CD4-positive, alpha-beta memory T cell (primary cell): ENCODE measurements at regions of chr9 and their contacts with region 1.

Region 1: GRCh38 chr9:131253891-131254491 is 22.3 kb downstream of the FAM78A start:
- DNase-seq: no peak
- H3K4me3 ChIP-seq: no peak overlapping the region
- H3K4me3 Mint-ChIP-seq: peak overlapping the region in 7 of 8 donors; percentile 27 to 91 (median 46)
- H3K27ac ChIP-seq: peak overlapping the region; percentile 77
- H3K27ac Mint-ChIP-seq: peak overlapping the region; percentile 57 to 100 (median 72)
- H3K4me1 ChIP-seq: peaks cover 72% of the 10 kb centered on the region
- H3K4me1 Mint-ChIP-seq: peaks cover 27 to 73% (median 50%) of the 10 kb centered on the region in 4 donors
- H3K27me3 ChIP-seq: no peaks in the 10 kb centered on the region
- H3K27me3 Mint-ChIP-seq: no peaks in the 10 kb centered on the region

Region 2: DNA sequence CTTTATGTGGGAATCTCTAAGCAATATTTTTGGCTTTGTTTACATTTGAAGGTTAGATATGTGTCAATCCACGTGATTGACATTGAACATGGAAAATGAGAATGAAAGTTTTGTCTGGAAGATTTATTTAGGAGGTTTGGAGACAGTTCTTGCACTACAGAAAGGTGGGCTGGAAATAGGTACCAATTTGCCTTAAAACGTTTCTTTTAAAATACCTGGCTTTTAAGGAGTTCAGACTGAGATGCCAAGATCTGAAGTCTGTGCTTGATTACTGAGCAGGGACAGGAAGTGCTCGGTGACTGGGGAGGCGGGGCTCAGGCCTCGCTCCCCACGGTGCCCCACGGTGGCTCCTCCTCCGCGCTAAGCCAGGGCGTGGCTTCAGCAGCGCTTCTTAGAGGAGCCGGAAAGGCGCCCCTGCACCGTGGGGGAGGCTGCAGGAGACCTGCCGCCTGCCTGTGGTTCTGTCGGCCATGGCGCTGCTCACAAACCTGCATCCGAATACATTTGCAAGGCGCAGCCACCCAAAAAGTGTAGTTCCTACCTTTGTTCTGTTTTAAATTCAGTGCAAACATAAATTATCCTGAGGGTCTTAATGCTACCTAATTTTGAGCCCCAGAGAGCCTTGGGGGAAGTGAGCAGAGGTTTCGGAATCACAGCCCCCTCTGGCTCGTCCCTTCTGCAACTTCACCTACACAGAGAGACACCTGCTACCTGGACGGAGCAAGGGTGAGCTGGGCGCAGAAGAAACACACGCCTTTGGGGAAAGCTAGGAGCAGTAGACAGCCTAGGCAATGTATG is 1369.6 kb before region 1 on chr9:
- CTCF ChIA-PET with region 1: no interaction called
- POLR2A ChIA-PET with region 1: no interaction called
- intact Hi-C with region 1: no loop called
- DNase-seq: peak; percentile 93 to 97 (median 95)
- H3K4me3 ChIP-seq: peak overlapping the region; percentile 78 to 80
- H3K4me3 Mint-ChIP-seq: peak overlapping the region; percentile 90 to 98 (median 94)
- H3K27ac ChIP-seq: peak overlapping the region; percentile 98
- H3K27ac Mint-ChIP-seq: peak overlapping the region; percentile 99 to 100 (median 100)
- H3K4me1 ChIP-seq: peaks cover 62% of the 10 kb centered on the region
- H3K4me1 Mint-ChIP-seq: peaks cover 26 to 60% (median 40%) of the 10 kb centered on the region in 4 donors
- H3K27me3 ChIP-seq: no peaks in the 10 kb centered on the region
- H3K27me3 Mint-ChIP-seq: no peaks in the 10 kb centered on the region

Region 3: DNA sequence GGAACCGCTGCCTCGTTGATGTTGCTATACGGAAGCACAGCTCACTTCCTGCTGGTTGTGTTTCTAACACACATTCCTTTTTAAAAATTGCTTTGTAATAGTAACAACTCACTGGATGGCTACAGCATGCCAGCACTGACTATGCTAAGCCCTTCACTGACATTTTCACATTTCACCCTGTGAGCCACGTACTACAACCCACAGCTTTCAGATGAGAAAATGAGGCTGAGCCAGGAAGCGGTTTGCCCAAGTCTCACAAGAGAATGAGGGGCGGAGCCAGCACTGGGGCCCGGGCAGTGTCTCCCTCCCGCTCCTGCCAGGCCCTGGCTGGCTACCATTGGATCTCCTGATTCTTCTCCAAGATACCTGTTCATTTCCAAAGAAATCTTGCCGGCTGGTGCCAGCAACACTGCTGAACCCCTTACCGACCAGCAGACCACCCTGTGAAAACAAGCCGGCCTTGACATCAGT is 16.0 kb before region 1 on chr9:
- CTCF ChIA-PET with region 1: interaction called, 10 read pairs
- POLR2A ChIA-PET with region 1: interaction called, 124 read pairs
- intact Hi-C with region 1: loop called (anchors 1 kb)
- DNase-seq: peak; percentile 84 to 89 (median 85)
- H3K4me3 ChIP-seq: peak overlapping the region in 1 of 2 donors; percentile 34
- H3K4me3 Mint-ChIP-seq: peak overlapping the region; percentile 77 to 87 (median 83)
- H3K27ac ChIP-seq: peak overlapping the region; percentile 42
- H3K27ac Mint-ChIP-seq: peak overlapping the region; percentile 84 to 98 (median 96)
- H3K4me1 ChIP-seq: peaks cover 65% of the 10 kb centered on the region
- H3K4me1 Mint-ChIP-seq: peaks cover 32 to 68% (median 49%) of the 10 kb centered on the region in 4 donors
- H3K27me3 ChIP-seq: no peaks in the 10 kb centered on the region
- H3K27me3 Mint-ChIP-seq: no peaks in the 10 kb centered on the region

Region 4: GRCh38 chr9:131270171-131271015 is 16.4 kb after region 1 on chr9:
- CTCF ChIA-PET with region 1: interaction called, 188 read pairs
- POLR2A ChIA-PET with region 1: interaction called, 1,324 read pairs
- intact Hi-C with region 1: loop called (anchors 1 kb)
- DNase-seq: peak; percentile 49 to 76 (median 55)
- H3K4me3 ChIP-seq: peak overlapping the region; percentile 31 to 91
- H3K4me3 Mint-ChIP-seq: peak overlapping the region; percentile 96 to 100 (median 99)
- H3K27ac ChIP-seq: peak overlapping the region; percentile 72
- H3K27ac Mint-ChIP-seq: peak overlapping the region; percentile 93 to 99 (median 96)
- H3K4me1 ChIP-seq: peaks cover 63% of the 10 kb centered on the region
- H3K4me1 Mint-ChIP-seq: peaks cover 39 to 84% (median 52%) of the 10 kb centered on the region in 4 donors
- H3K27me3 ChIP-seq: no peaks in the 10 kb centered on the region
- H3K27me3 Mint-ChIP-seq: no peaks in the 10 kb centered on the region

Region 5: DNA sequence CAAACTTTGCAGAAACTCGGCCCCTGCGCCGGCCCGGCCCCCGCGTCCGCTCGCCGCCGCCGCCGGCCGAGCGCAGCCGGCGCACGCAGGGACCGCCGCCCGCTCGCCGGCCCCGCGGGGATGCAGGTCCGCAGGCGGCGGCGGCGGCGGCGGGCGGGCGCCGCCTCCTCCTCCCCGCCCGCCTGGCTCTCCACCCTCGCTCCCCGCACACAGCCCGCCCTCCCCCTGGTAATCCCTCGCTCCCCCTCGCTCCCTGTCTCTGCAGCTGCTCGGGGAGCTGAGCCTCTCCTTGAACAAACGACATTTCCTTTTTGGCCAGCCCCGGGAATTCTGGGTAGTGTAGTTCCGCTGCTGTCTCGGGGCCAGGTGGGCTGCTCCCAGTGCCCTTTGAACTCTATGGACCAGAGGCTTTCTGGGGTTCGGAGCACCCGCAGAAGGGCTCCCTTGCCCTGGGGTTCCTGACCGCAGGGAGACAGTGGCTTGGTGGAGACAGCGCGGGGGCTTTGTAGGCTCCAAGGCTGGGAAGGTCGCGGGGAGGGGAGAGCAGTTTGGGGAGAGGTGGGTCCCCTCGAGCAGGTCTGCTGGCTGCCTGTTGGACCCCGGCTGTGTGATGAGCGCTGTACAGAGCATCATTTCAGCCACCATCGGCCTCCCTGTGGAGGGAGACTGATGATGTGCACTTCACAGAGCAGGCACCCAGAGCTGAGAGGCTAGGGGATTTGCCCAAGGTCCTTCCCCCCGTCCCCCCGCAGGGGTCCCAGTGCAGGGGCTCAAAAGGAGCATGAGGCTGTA is 24.1 kb after region 1 on chr9:
- CTCF ChIA-PET with region 1: interaction called, 188 read pairs
- POLR2A ChIA-PET with region 1: interaction called, 1,324 read pairs
- intact Hi-C with region 1: loop called (anchors 1 kb)
- DNase-seq: peak; percentile 60 to 78 (median 61)
- H3K4me3 ChIP-seq: peak overlapping the region; percentile 21 to 65
- H3K4me3 Mint-ChIP-seq: peak overlapping the region; percentile 84 to 93 (median 91)
- H3K27ac ChIP-seq: peak overlapping the region; percentile 79
- H3K27ac Mint-ChIP-seq: peak overlapping the region; percentile 92 to 95 (median 94)
- H3K4me1 ChIP-seq: peaks cover 27% of the 10 kb centered on the region
- H3K4me1 Mint-ChIP-seq: peaks cover 22 to 49% (median 25%) of the 10 kb centered on the region in 4 donors
- H3K27me3 ChIP-seq: no peaks in the 10 kb centered on the region
- H3K27me3 Mint-ChIP-seq: peaks cover 2 to 3% of the 10 kb centered on the region in 2 donors

Region 6: DNA sequence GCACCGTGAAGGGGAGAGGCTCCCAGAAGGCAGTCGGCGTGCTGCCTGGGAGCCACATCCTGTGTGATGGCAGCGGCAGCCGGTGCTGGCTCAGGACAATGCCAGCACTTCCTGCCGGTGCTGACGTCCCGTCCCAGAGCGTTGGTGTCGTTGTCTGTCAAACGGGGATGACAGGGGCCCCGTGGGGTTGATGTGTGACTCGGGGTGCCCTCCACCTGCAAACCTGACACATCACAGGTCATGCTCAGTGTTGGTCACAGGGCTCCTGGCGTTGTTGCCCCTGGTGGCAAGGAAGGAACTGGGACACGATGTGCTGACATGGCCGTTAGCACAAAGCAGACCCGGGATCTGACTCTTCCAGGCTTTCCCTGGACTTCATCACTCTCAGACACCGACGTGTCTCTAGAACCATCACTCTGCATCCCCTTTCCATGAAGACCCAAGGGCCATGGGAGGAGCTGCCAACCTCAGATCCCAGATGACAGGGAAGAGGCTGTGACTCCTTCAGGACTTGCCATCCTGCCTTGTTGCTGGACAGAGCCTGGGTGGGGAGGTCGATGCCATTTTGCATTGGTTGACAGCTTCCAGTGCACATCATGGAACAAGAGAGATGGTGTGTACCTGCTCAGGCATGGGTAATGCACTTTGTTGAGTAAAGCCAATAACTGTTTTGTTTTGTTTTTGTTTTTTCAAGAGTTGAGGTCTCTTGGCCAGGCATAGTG is 57.0 kb after region 1 on chr9:
- CTCF ChIA-PET with region 1: interaction called, 4 read pairs
- POLR2A ChIA-PET with region 1: interaction called, 16 read pairs
- intact Hi-C with region 1: no loop called
- DNase-seq: peak; percentile 67 to 87 (median 74)
- H3K4me3 ChIP-seq: peak overlapping the region; percentile 4 to 42
- H3K4me3 Mint-ChIP-seq: peak overlapping the region; percentile 31 to 79 (median 73)
- H3K27ac ChIP-seq: no peak overlapping the region
- H3K27ac Mint-ChIP-seq: peak overlapping the region in 6 of 7 donors; percentile 79 to 86 (median 84)
- H3K4me1 ChIP-seq: peaks cover 12% of the 10 kb centered on the region
- H3K4me1 Mint-ChIP-seq: peaks cover 9 to 13% (median 12%) of the 10 kb centered on the region in 4 donors
- H3K27me3 ChIP-seq: no peaks in the 10 kb centered on the region
- H3K27me3 Mint-ChIP-seq: no peaks in the 10 kb centered on the region